ENCODE measurements at regions of chr17 and their contacts with region 1.

Region 1: GRCh38 chr17:50397111-50397918 is at the start of gene LRRC59:
- DNase-seq: peak; percentile 81
- ATAC-seq: peak; percentile 93
- H3K4me3 ChIP-seq: peak within 1 kb of the TSS; percentile 73 to 99 (median 99)
- H3K27ac ChIP-seq: peak within 1 kb of the TSS; percentile 85
- H3K4me1 ChIP-seq: peaks cover 27% of the 10 kb centered on the region
- H3K27me3 ChIP-seq: peaks cover 0 to 3% of the 10 kb centered on the region in 2 experiments; a peak in 1 of 5 replicates
- CTCF ChIP-seq: peak; percentile 100
- EP300 ChIP-seq: peak; percentile 56 to 73; a peak in 3 of 4 replicates
- POLR2A ChIP-seq: peak; percentile 91 to 96
- RAD21 ChIP-seq: peak; percentile 92
- total RNA-seq, gene LRRC59: 222 and 239 TPM in 2 replicates

Region 2: GRCh38 chr17:50372758-50373556 is 24.4 kb before region 1 on chr17 and contains the starts of genes EME1 and MRPL27:
- CTCF ChIA-PET with region 1: no interaction called
- POLR2A ChIA-PET with region 1: interaction called, 15 read pairs
- in situ Hi-C with region 1: no loop called
- intact Hi-C with region 1: no loop called
- DNase-seq: peak; percentile 94
- ATAC-seq: peak; percentile 92
- H3K4me3 ChIP-seq: peak within 1 kb of the TSS; percentile 91 to 98 (median 93)
- H3K27ac ChIP-seq: peak within 1 kb of the TSS; percentile 87
- H3K4me1 ChIP-seq: peaks cover 29% of the 10 kb centered on the region
- H3K27me3 ChIP-seq: no peaks in the 10 kb centered on the region; a peak in 1 of 5 replicates
- CTCF ChIP-seq: peak; percentile 27; the same call in 1 of the 2 replicates
- EP300 ChIP-seq: 0 out of 4 replicates have a peak, but pooled peaks of 1 of the 2 experiments have one; percentile 32
- POLR2A ChIP-seq: peak; percentile 92 to 95
- RAD21 ChIP-seq: peak; percentile 56; the same call in 1 of the 2 replicates
- total RNA-seq, gene EME1: 17.3 and 24.6 TPM in 2 replicates
- total RNA-seq, gene MRPL27: 217 and 294 TPM in 2 replicates

Region 3: GRCh38 chr17:50386510-50386909 is 10.8 kb before region 1 on chr17:
- CTCF ChIA-PET with region 1: no interaction called
- POLR2A ChIA-PET with region 1: interaction called, 19 read pairs
- in situ Hi-C with region 1: no loop called
- intact Hi-C with region 1: no loop called
- DNase-seq: no peak
- ATAC-seq: peak; percentile 9; the same call in 2 of the 3 replicates
- H3K4me3 ChIP-seq: no peak overlapping the region
- H3K27ac ChIP-seq: no peak overlapping the region
- H3K4me1 ChIP-seq: no peaks in the 10 kb centered on the region
- H3K27me3 ChIP-seq: no peaks in the 10 kb centered on the region
- CTCF ChIP-seq: no peak
- EP300 ChIP-seq: no peak
- POLR2A ChIP-seq: no peak
- RAD21 ChIP-seq: no peak

Region 4: GRCh38 chr17:50425682-50426471 is 28.6 kb after region 1 on chr17 and contains the start of gene ACSF2:
- CTCF ChIA-PET with region 1: interaction called, 6 read pairs
- POLR2A ChIA-PET with region 1: interaction called, 99 read pairs
- in situ Hi-C with region 1: no loop called
- intact Hi-C with region 1: loop called (anchors 1 kb)
- DNase-seq: peak; percentile 54
- ATAC-seq: peak; percentile 67
- H3K4me3 ChIP-seq: peak within 1 kb of the TSS; percentile 74 to 91 (median 90)
- H3K27ac ChIP-seq: peak within 1 kb of the TSS; percentile 83
- H3K4me1 ChIP-seq: peaks cover 92% of the 10 kb centered on the region
- H3K27me3 ChIP-seq: no peaks in the 10 kb centered on the region; a peak in 1 of 5 replicates
- CTCF ChIP-seq: peak; percentile 38
- EP300 ChIP-seq: 0 out of 4 replicates have a peak, but pooled peaks of 1 of the 2 experiments have one; percentile 13
- POLR2A ChIP-seq: peak; percentile 51 to 89; a peak in 3 of 4 replicates
- RAD21 ChIP-seq: no peak
- total RNA-seq, gene ACSF2: 32.0 and 87.3 TPM in 2 replicates

Region 5: GRCh38 chr17:50458701-50459676 is 61.7 kb after region 1 on chr17:
- CTCF ChIA-PET with region 1: no interaction called
- POLR2A ChIA-PET with region 1: interaction called, 16 read pairs
- in situ Hi-C with region 1: no loop called
- intact Hi-C with region 1: loop called (anchors 1 kb)
- DNase-seq: peak; percentile 95
- ATAC-seq: peak; percentile 89
- H3K4me3 ChIP-seq: peak overlapping the region in 1 of 3 experiments; percentile 18; a peak in 1 of 6 replicates
- H3K27ac ChIP-seq: peak overlapping the region; percentile 41
- H3K4me1 ChIP-seq: peaks cover 24% of the 10 kb centered on the region
- H3K27me3 ChIP-seq: no peaks in the 10 kb centered on the region
- CTCF ChIP-seq: peak; percentile 26
- EP300 ChIP-seq: peak; percentile 39 to 57; a peak in 2 of 4 replicates
- POLR2A ChIP-seq: peak; percentile 20 to 31; a peak in 2 of 4 replicates
- RAD21 ChIP-seq: no peak

Measured in HepG2 (cell line).